ENCODE measurements at regions of chr21 and their contacts with region 1.

Region 1: DNA sequence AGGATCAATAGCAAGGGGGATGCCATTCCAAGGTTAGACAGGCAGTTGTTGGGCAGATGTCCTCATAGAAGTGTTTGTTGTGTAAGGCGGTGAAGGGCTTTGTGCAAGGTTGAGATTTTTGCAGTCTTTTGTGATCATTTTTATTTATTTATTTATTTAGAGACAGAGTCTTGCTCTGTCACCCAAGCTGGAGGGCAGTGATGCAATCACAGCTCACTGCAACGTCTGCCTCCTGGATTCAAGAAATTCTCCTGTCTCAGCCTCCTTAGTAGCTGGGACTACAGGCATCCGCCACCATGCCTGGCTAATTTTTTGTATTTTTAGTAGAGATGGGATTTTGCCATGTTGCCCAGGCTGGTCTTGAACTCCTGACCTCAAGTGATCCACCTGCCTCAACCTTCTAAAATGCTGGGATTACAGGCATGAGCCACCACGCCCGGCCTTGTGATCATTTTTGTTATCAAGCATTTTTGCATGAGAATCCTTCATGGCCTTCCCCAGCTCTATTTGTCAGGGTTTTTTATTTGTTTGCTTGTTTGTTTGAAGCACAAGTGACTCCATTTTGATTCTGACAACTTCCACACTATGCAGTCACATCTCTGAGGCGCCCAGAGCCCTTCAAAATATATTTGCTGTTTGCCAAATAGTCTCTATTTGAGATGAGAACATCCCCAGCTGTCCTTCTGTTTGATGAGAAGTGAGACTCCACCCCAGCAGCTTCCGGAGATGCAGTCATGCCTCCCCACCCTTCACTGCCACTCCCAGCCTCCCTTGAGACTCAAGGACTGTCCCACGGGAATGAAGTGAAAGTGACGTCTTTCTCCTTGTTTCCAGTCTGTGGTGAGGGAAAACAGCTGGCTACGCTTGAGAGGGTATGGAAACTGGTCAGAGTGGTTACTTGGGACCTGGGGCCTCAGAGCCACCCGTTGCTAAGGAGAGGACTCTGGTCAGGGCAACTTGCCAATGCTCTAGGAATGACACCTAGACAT is 38.0 kb downstream of the TMEM50B start:
- DNase-seq: no peak
- ATAC-seq: no peak
- H3K4me3 Mint-ChIP-seq: no peak overlapping the region
- H3K27ac Mint-ChIP-seq: peak overlapping the region; percentile 27; the same call in 1 of the 2 replicates
- H3K4me1 Mint-ChIP-seq: no peaks in the 10 kb centered on the region
- H3K27me3 Mint-ChIP-seq: no peaks in the 10 kb centered on the region
- CTCF ChIP-seq: no peak

Region 2: DNA sequence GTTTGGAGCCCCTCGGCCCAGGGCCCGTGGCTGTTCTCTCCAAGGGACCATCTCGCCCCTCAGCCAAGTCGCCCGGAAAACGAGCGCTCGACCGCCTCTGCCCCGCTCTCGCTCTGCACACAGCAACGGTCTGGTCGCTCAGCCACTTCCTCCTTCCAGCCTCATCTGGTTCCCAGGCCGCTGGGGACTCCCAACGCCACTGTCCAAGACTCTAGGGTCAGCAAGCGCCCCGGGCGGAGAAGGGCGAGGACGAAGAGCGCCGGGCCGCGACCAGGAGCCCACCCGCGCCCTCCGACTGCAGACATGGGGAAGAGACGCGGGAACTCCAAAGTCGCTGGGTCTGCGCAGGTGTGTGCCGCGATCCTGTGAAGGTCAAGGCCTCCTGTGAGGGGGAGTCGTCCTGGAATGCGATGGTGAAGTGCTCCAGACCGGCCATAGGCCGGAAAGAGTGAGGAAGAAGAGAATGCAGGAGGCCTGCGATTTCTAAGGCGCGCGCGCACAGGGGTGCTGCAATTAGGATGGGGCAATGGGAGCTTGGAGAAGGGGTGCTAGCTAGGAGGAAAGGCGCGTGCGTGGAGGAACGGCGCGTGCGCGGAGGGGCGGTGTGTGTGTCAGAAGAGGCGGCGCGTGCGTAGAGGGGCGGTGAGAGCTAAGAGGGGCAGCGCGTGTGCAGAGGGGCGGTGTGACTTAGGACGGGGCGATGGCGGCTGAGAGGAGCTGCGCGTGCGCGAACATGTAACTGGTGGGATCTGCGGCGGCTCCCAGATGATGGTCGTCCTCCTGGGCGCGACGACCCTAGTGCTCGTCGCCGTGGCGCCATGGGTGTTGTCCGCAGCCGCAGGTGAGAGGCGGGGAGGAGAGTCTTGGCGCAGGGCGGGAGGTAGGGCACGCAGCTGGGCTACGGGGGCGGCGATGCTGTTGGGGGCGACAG is 117.2 kb before region 1 on chr21 and contains the start of gene IFNAR1:
- CTCF ChIA-PET with region 1: interaction called, 10 read pairs
- POLR2A ChIA-PET with region 1: interaction called, 3 read pairs
- DNase-seq: peak; percentile 94
- ATAC-seq: peak; percentile 92
- H3K4me3 Mint-ChIP-seq: no peak within 1 kb of the TSS
- H3K27ac Mint-ChIP-seq: no peak within 1 kb of the TSS
- H3K4me1 Mint-ChIP-seq: no peaks in the 10 kb centered on the region
- H3K27me3 Mint-ChIP-seq: no peaks in the 10 kb centered on the region
- CTCF ChIP-seq: no peak
- total RNA-seq, gene IFNAR1: 12.2 to 14.6 TPM (median 13.2 TPM) in 3 replicates

Region 3: GRCh38 chr21:33348706-33349105 is 93.1 kb before region 1 on chr21:
- CTCF ChIA-PET with region 1: interaction called, 21 read pairs
- POLR2A ChIA-PET with region 1: no interaction called
- DNase-seq: no peak
- ATAC-seq: no peak
- H3K4me3 Mint-ChIP-seq: no peak overlapping the region
- H3K27ac Mint-ChIP-seq: no peak overlapping the region
- H3K4me1 Mint-ChIP-seq: no peaks in the 10 kb centered on the region
- H3K27me3 Mint-ChIP-seq: no peaks in the 10 kb centered on the region
- CTCF ChIP-seq: no peak

Region 4: GRCh38 chr21:33458861-33459260 is 17.1 kb after region 1 on chr21:
- CTCF ChIA-PET with region 1: interaction called, 11 read pairs
- POLR2A ChIA-PET with region 1: no interaction called
- DNase-seq: no peak
- ATAC-seq: no peak
- H3K4me3 Mint-ChIP-seq: no peak overlapping the region
- H3K27ac Mint-ChIP-seq: no peak overlapping the region
- H3K4me1 Mint-ChIP-seq: peaks cover 13% of the 10 kb centered on the region
- H3K27me3 Mint-ChIP-seq: no peaks in the 10 kb centered on the region
- CTCF ChIP-seq: no peak

Region 5: GRCh38 chr21:33566514-33566913 is 124.7 kb after region 1 on chr21:
- CTCF ChIA-PET with region 1: no interaction called
- POLR2A ChIA-PET with region 1: no interaction called
- DNase-seq: no peak
- ATAC-seq: no peak
- H3K4me3 Mint-ChIP-seq: no peak overlapping the region
- H3K27ac Mint-ChIP-seq: no peak overlapping the region
- H3K4me1 Mint-ChIP-seq: no peaks in the 10 kb centered on the region
- H3K27me3 Mint-ChIP-seq: no peaks in the 10 kb centered on the region
- CTCF ChIP-seq: no peak

Measured in WTC11 (cell line).